Ascending aorta (tissue), 2 donors: ENCODE measurements at regions of chr3 and their contacts with region 1.

Region 1: GRCh38 chr3:177359593-177360357 is 162.5 kb upstream of the TBL1XR1 start:
- DNase-seq: peak; percentile 79 to 97
- H3K4me3 ChIP-seq: peak overlapping the region; percentile 29 to 59
- H3K27ac ChIP-seq: peak overlapping the region; percentile 88 to 90
- H3K4me1 ChIP-seq: peaks cover 20 to 49% of the 10 kb centered on the region in 2 donors
- H3K27me3 ChIP-seq: no peaks in the 10 kb centered on the region
- CTCF ChIP-seq: no peak

Region 2: DNA sequence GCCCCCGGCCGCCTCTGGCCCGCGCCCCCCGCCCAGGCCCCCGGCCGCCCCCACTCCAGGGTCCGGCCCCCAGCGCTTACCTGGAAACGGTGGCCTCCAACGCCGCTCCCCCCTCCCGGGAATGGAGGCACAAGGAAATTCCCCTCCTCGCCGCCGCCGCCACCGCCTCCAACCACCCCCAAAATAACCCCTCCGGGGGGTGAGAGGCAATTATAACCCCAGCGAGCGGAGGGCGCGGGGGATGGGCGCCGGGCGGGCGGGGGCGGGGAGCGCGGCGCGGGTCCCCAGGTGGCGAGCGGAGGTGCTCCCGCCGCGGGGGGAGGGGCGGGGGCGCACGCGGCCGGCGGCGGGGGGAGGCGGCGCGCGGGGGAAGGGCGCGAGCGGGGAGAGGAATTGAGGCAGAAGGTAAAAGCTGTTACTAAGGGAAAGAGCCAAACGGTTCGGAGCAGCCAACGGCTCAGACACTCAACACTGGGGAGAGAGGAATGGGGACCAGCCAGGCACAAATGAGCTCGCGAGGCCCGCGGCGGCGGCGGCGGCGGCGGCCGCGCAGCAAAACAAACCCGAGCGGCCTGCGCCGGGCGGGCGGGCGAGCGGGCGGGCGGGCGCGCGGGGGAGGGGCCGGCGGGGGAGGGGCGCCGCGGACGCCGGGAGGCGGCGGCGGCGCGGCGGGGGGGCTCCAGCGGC is 162.6 kb before region 1 on chr3 and contains the start of gene TBL1XR1:
- intact Hi-C with region 1: loop called (anchors 1 kb)
- DNase-seq: peak; percentile 73 to 96
- H3K4me3 ChIP-seq: peak within 1 kb of the TSS; percentile 97
- H3K27ac ChIP-seq: peak within 1 kb of the TSS; percentile 96 to 98
- H3K4me1 ChIP-seq: peaks cover 0 to 12% of the 10 kb centered on the region in 2 donors
- H3K27me3 ChIP-seq: no peaks in the 10 kb centered on the region
- CTCF ChIP-seq: no peak
- total RNA-seq, gene TBL1XR1: 52.0 TPM

Region 3: DNA sequence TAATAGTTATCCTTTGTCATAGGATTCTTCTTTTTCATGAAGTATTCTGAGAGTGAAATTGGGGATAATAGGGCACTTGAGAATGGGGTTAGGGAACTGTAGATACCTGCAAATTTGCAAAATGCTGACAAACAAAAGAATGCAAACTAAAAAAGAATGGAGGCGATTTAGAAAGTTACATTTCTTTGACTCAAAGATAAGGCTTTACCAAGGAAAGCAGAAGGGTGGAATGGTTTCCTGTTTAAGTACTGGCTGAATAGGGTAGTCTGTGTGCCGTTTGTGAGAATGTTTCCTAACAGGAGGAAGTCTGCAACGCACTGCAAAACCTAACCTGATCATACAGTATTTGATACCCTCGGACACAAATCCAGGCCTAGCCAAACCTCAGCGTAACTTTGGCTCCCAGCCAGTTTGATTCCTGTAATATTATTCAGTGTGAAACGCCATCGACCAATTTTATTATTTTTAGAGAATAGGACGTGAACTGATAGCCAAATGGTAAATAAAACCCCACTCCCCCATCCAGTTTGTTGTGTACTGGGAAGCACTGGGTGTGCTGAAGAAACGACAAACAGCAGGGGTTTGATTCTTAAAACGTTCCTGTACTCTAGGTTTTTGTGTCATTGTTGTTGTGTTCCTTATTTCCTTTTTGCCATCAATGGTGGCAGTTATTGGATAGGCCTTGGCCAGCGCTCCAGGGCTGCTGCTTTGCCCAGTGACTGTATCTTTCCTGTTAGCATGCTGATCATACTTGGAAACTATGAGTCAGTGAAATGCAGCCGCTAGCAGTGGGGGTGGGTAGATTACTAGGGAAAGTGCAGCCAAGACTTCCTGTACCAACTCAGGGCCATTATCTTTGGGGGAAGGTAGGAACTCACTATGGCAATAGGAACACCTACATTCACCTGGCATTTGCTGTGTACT is 14.5 kb before region 1 on chr3:
- intact Hi-C with region 1: loop called (anchors 1 kb)
- DNase-seq: peak; percentile 80 to 96
- H3K4me3 ChIP-seq: peak overlapping the region; percentile 18 to 31
- H3K27ac ChIP-seq: peak overlapping the region; percentile 89 to 91
- H3K4me1 ChIP-seq: peaks cover 5 to 47% of the 10 kb centered on the region in 2 donors
- H3K27me3 ChIP-seq: no peaks in the 10 kb centered on the region
- CTCF ChIP-seq: no peak

Region 4: GRCh38 chr3:177478170-177478860 is 118.5 kb after region 1 on chr3:
- intact Hi-C with region 1: loop called (anchors 5 kb)
- DNase-seq: peak in 1 of 2 donors; percentile 79
- H3K4me3 ChIP-seq: no peak overlapping the region
- H3K27ac ChIP-seq: peak overlapping the region; percentile 69 to 75
- H3K4me1 ChIP-seq: peaks cover 0 to 25% of the 10 kb centered on the region in 2 donors
- H3K27me3 ChIP-seq: no peaks in the 10 kb centered on the region
- CTCF ChIP-seq: no peak

Region 5: DNA sequence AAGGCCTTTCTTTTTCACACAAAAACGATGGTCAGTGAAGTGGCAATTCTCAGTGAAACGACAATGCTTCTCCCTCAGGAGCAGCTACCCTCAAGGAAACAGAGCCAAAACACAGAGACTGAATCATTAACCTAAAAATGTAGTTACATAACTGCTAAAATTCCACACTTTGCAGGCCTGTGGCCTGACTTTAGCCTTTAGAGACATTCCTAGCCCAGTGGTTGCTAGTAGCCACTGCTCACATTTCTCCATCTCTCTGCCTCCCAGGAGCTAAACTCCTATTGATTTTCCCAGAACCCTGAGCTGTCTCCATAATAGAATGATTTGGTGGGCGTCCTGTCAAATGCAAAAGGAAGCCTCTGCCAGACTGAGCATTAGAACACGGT is 546.3 kb after region 1 on chr3:
- intact Hi-C with region 1: loop called (anchors 10 kb)
- DNase-seq: no peak
- H3K4me3 ChIP-seq: no peak overlapping the region
- H3K27ac ChIP-seq: peak overlapping the region; percentile 51 to 62
- H3K4me1 ChIP-seq: peaks cover 5 to 29% of the 10 kb centered on the region in 2 donors
- H3K27me3 ChIP-seq: no peaks in the 10 kb centered on the region
- CTCF ChIP-seq: peak in 2 of 3 experiments; percentile 5 to 18

Region 6: GRCh38 chr3:178367817-178368617 is 1008.2 kb after region 1 on chr3:
- intact Hi-C with region 1: loop called (anchors 5 kb)
- DNase-seq: peak in 1 of 2 donors; percentile 70
- H3K4me3 ChIP-seq: no peak overlapping the region
- H3K27ac ChIP-seq: peak overlapping the region; percentile 61 to 62
- H3K4me1 ChIP-seq: peaks cover 0 to 5% of the 10 kb centered on the region in 2 donors
- H3K27me3 ChIP-seq: no peaks in the 10 kb centered on the region
- CTCF ChIP-seq: no peak